WTC11 (cell line): ENCODE measurements at regions of chr1 and their contacts with region 1.

Region 1: DNA sequence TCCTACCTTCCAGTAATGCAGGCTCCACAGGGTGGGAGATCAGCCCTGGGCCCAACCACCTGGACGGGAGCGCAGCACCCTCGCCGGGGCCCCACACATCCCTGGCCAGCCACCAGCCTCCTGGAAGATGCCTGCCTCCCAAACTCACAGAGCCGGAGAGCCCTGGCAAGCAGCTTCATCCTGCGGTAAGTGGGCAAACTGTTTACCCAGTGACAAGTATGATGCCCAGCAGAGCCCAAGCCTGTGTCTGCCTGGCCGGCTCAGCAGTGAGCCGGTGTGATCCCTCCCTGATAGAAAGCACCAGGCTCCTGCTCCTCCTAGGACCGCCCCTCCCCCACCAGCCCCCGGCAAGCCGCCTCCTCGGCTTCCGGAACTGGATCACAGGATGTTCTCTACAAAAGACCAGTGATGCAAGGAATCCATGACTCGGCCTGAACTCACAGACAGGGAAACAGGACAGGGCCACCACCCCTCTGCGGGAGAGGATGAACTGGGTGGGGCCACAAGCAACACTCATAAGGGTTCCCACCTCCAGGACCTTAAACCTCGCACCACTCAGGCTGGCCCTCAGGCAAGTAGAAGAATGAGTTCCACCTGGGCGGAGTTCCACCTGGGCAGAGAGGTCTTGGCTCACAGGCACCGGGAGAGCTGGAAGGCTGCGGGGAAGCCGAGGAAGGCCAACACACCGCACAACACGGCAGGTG is 7.9 kb downstream of the ACOT7 start:
- DNase-seq: peak; percentile 90
- ATAC-seq: peak; percentile 88
- H3K4me3 Mint-ChIP-seq: peak overlapping the region; percentile 57
- H3K27ac Mint-ChIP-seq: peak overlapping the region; percentile 99
- H3K4me1 Mint-ChIP-seq: peaks cover 33% of the 10 kb centered on the region
- H3K27me3 Mint-ChIP-seq: no peaks in the 10 kb centered on the region; the same call in 1 of the 2 replicates
- CTCF ChIP-seq: no peak

Region 2: DNA sequence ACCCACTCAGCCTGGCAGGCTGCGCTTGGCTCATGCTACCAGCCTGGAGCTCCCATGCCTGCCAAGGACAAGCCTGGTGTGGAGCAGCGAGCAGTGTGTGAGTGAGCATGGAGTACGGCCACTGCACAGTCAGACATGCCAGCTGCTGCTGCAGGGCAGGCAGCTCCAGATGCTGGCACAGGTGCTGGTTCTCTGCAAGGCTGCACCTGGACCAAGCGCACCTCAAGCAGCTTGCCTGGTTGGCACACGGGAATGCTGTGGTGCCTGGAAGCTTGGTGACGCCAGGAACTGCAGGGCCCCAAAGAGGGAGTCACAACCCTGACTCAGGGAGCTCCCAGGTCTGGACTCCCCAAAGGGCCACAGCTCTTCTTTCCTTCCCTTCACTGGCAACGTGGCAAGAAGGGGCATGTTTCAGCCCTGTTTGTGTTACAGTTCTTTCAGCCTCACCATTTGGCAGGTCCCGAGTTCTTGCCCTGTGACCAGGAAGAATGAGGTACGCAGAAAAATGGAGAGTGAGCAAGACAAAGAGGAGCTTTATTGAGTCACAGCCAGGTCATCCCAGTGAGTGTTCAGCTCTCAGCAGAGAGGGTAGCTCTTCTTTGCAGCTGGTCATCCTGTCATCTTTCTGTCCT is 18.1 kb before region 1 on chr1:
- CTCF ChIA-PET with region 1: interaction called, 5 read pairs
- POLR2A ChIA-PET with region 1: interaction called, 12 read pairs
- DNase-seq: no peak
- ATAC-seq: no peak
- H3K4me3 Mint-ChIP-seq: no peak overlapping the region
- H3K27ac Mint-ChIP-seq: peak overlapping the region; percentile 45; the same call in 1 of the 2 replicates
- H3K4me1 Mint-ChIP-seq: peaks cover 10% of the 10 kb centered on the region
- H3K27me3 Mint-ChIP-seq: no peaks in the 10 kb centered on the region
- CTCF ChIP-seq: no peak

Region 3: DNA sequence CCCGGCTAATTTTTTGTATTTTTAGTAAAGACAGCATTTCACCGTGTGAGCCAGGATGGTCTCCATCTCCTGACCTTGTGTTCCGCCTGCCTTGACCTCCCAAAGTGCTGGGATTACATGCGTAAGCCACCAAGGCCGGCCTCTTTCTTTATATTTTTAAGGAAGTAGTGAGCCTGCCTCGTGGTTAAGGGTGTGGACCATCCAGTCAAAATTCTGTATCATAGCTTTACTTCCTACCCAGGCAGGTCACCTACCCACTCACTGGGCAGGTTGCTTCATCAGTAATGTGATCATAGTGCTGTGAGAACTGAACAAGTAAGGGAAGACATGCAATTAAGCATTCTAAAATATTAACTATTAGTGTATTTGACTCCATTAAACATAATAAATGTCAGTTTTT is 16.0 kb after region 1 on chr1:
- CTCF ChIA-PET with region 1: interaction called, 14 read pairs
- POLR2A ChIA-PET with region 1: interaction called, 3 read pairs
- DNase-seq: no peak
- ATAC-seq: no peak
- H3K4me3 Mint-ChIP-seq: no peak overlapping the region
- H3K27ac Mint-ChIP-seq: no peak overlapping the region
- H3K4me1 Mint-ChIP-seq: no peaks in the 10 kb centered on the region
- H3K27me3 Mint-ChIP-seq: peaks cover 20% of the 10 kb centered on the region
- CTCF ChIP-seq: no peak